ENCODE measurements at regions of chr2 and their contacts with region 1.

Region 1: GRCh38 chr2:238784671-238785527 is 63.0 kb upstream of the TWIST2 start:
- DNase-seq: peak; percentile 72
- H3K4me3 Mint-ChIP-seq: no peak overlapping the region
- H3K27ac Mint-ChIP-seq: no peak overlapping the region
- H3K4me1 Mint-ChIP-seq: no peaks in the 10 kb centered on the region
- H3K27me3 Mint-ChIP-seq: peaks cover 15% of the 10 kb centered on the region
- CTCF ChIP-seq: peak; percentile 94

Region 2: GRCh38 chr2:238362626-238363025 is 422.3 kb before region 1 on chr2:
- CTCF ChIA-PET with region 1: no interaction called
- intact Hi-C with region 1: loop called (anchors 1 kb)
- DNase-seq: no peak
- H3K4me3 Mint-ChIP-seq: no peak overlapping the region
- H3K27ac Mint-ChIP-seq: no peak overlapping the region
- H3K4me1 Mint-ChIP-seq: peaks cover under 1% of the 10 kb centered on the region
- H3K27me3 Mint-ChIP-seq: no peaks in the 10 kb centered on the region
- CTCF ChIP-seq: no peak

Region 3: GRCh38 chr2:238370823-238371372 is 414.0 kb before region 1 on chr2:
- CTCF ChIA-PET with region 1: interaction called, 11 read pairs
- intact Hi-C with region 1: loop called (anchors 5 kb)
- DNase-seq: peak; percentile 83
- H3K4me3 Mint-ChIP-seq: no peak overlapping the region
- H3K27ac Mint-ChIP-seq: peak overlapping the region; percentile 68
- H3K4me1 Mint-ChIP-seq: peaks cover 13% of the 10 kb centered on the region
- H3K27me3 Mint-ChIP-seq: no peaks in the 10 kb centered on the region
- CTCF ChIP-seq: peak; percentile 88

Region 4: DNA sequence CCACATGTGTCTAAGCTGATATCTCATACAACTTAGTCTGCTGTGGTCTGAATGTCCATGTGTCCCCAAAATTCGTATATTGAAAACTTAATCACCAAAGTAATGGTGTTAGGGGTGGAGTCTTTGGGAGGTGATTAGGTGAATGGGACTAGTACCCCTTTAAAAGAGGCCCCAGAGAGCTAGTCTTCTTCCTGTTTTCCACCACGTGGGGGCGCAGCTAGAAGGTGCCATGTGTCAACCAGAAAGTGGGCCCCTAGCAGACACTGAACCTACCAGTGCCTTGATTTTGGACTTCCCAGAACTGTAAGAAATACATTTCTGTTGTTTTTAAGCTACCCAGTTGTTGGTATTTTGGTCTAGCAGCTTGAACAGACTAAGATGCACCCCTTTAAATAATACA is 271.6 kb before region 1 on chr2:
- CTCF ChIA-PET with region 1: interaction called, 6 read pairs
- intact Hi-C with region 1: loop called (anchors 1 kb)
- DNase-seq: peak; percentile 53
- H3K4me3 Mint-ChIP-seq: no peak overlapping the region
- H3K27ac Mint-ChIP-seq: no peak overlapping the region
- H3K4me1 Mint-ChIP-seq: no peaks in the 10 kb centered on the region
- H3K27me3 Mint-ChIP-seq: no peaks in the 10 kb centered on the region
- CTCF ChIP-seq: peak; percentile 45

Region 5: DNA sequence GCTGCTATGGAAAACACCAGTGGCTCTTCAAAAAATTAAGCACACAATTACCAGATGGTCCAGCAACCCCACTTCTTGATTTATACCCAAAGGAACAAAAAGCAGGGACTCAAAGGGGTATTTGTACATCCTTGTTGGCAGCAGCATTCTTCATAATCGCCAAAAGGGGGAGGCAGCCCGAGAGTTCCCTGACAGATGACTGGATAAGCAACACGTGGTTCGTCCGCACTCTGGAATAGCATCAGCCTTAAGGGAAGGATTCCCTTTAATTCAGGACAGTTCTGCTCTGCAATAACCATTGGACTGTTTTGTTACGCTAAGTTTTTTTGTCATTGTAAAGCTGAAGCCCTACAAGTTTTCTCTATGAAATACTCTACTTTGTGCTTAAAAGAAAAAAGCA is 13.7 kb before region 1 on chr2:
- CTCF ChIA-PET with region 1: no interaction called
- intact Hi-C with region 1: no loop called
- DNase-seq: no peak
- H3K4me3 Mint-ChIP-seq: no peak overlapping the region
- H3K27ac Mint-ChIP-seq: no peak overlapping the region
- H3K4me1 Mint-ChIP-seq: no peaks in the 10 kb centered on the region
- H3K27me3 Mint-ChIP-seq: peaks cover 81% of the 10 kb centered on the region
- CTCF ChIP-seq: no peak

Measured in Calu3 (cell line).